Mammary epithelial cell (primary cell): ENCODE measurements at regions of chr7 and their contacts with region 1.

Region 1: GRCh38 chr7:87219545-87220025 is at the start of gene TMEM243:
- DNase-seq: peak; percentile 47
- H3K4me3 ChIP-seq: peak within 1 kb of the TSS; percentile 73 to 97 (median 97)
- H3K27ac ChIP-seq: peak within 1 kb of the TSS; percentile 69
- H3K4me1 ChIP-seq: peaks cover 23% of the 10 kb centered on the region
- H3K27me3 ChIP-seq: no peaks in the 10 kb centered on the region
- CTCF ChIP-seq: peak in 1 of 2 donors; percentile 5
- total RNA-seq, gene TMEM243: 11.0 to 19.5 TPM

Region 2: GRCh38 chr7:87038993-87039716 is 180.4 kb before region 1 on chr7:
- CTCF ChIA-PET with region 1: no interaction called
- dilution Hi-C with region 1: no loop called
- in situ Hi-C with region 1: loop called in 1 of 2 experiments (anchors 10 kb)
- intact Hi-C with region 1: no loop called
- DNase-seq: no peak
- H3K4me3 ChIP-seq: no peak overlapping the region
- H3K27ac ChIP-seq: no peak overlapping the region
- H3K4me1 ChIP-seq: no peaks in the 10 kb centered on the region
- H3K27me3 ChIP-seq: no peaks in the 10 kb centered on the region
- CTCF ChIP-seq: no peak

Region 3: GRCh38 chr7:88254716-88255115 is 1035.1 kb after region 1 on chr7:
- CTCF ChIA-PET with region 1: no interaction called
- dilution Hi-C with region 1: no loop called
- in situ Hi-C with region 1: no loop called
- intact Hi-C with region 1: no loop called
- DNase-seq: peak; percentile 98
- H3K4me3 ChIP-seq: no peak overlapping the region
- H3K27ac ChIP-seq: peak overlapping the region; percentile 82
- H3K4me1 ChIP-seq: peaks cover 31% of the 10 kb centered on the region
- H3K27me3 ChIP-seq: no peaks in the 10 kb centered on the region
- CTCF ChIP-seq: no peak